ENCODE measurements at regions of chr7 and their contacts with region 1.

Region 1: DNA sequence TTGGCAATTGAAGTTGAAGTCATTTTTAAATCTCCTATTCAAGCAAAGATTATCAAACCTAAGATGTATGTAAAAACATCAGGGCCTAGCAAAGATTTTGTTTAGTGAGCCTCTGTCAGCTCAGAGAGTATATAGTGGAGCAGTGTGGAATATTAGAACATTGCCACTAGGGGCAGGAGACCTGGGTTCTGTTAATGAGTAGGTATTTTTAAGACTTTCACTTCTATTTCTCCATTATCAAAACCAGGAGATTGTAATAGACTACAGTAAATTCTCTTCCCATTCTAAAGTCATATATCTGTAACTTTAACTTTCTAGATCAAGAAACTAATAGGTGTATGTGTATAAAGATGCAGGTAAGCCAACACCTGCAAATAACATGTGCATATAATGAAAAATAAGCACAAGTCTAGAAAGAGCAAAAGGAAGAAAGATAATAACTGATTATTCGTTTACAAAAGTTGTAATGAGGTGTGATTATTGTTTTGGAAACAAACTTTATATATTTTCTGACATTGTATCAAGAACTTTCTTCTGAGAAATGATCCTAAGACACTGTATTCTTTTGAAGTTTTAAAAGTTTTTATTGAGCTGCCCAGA is 64.4 kb downstream of the KCND2 start:
- DNase-seq: peak in 1 of 7 donors; percentile 6
- H3K4me3 ChIP-seq: no peak overlapping the region
- H3K27ac ChIP-seq: no peak overlapping the region
- H3K4me1 ChIP-seq: no peaks in the 10 kb centered on the region
- H3K27me3 ChIP-seq: no peaks in the 10 kb centered on the region
- CTCF ChIP-seq: peak in 3 of 6 experiments; percentile 24 to 47 (median 29)
- POLR2A ChIP-seq: no peak

Region 2: GRCh38 chr7:120327054-120327453 is 10.4 kb before region 1 on chr7:
- intact Hi-C with region 1: loop called in 1 of 2 experiments (anchors 2 kb)
- DNase-seq: no peak
- H3K4me3 ChIP-seq: no peak overlapping the region
- H3K27ac ChIP-seq: no peak overlapping the region
- H3K4me1 ChIP-seq: no peaks in the 10 kb centered on the region
- H3K27me3 ChIP-seq: no peaks in the 10 kb centered on the region
- CTCF ChIP-seq: no peak
- POLR2A ChIP-seq: no peak

Measured in adrenal gland (tissue), 19 donors.